Left colon (tissue), 2 donors: ENCODE measurements at regions of chr1 and their contacts with region 1.

Region 1: DNA sequence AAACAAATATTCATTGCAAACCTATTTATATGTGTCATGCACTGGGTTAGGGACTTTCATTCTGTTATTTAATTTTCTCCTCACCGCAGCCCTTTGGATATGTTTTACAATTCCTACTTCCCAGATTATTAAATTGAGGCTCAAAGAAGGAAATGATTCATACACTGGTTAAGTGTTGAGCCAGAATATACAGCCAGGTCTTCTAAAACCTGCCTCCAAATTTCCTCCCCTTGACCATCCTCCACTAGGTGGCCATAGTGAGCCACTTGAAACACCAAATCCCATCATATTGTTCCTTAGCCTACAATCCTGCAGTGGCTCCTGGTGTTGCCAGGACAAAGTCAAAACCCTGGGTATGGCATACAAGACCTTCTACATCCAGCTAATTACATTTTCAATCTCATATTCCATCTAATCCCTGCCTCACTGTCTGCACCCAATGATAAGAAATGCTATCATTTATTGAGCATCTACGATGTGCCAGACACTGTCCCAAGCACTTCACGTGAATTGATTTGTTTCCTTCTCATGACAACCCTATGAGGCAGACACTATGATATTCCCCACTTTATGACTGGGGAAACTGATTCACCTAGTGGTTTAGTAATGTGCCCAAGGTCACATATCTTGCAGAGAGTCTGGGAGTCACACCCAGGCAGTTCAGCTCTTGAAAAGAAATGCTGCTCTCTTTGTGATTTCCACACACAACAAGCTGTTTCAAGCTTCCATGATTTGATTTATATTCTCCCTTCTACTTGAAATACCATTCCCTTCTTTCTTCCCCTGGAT is 23.6 kb upstream of the KIRREL1 start:
- DNase-seq: peak in 1 of 2 donors; percentile 54
- ATAC-seq: peak; percentile 43

Region 2: GRCh38 chr1:158107916-158108315 is 138.0 kb after region 1 on chr1:
- intact Hi-C with region 1: loop called in 1 of 2 experiments (anchors 5 kb)
- DNase-seq: no peak
- ATAC-seq: no peak

Region 3: DNA sequence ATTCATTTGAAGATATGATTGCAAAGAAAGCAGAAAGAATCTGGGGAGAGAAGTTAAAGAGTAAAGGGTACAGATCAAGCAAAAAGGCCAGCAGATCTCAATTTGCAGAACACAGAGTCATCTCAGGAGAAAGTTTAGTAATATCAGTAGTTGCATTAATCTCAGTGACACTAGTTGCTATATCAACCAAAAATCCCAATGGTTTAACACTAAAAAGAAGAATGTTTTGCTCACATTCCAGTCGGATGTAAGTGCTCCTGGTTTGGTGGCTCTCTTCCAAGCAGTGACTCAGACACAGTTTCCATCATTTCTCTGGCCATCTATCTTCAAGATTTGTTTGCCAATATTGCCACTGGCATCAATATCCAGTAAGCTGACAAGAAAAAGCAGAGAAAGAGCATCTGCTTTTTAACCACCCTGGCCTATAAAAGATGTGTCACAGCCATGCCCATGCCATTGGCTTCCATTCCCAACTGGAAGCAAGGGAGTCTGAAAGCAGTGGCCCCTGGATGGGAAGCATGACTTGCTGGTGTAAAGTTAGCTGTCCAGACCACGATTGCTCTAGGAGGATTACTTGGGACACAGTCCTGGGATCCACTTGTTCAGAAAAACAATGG is 1152.2 kb after region 1 on chr1:
- intact Hi-C with region 1: no loop called
- DNase-seq: no peak
- ATAC-seq: no peak